ENCODE measurements at regions of chr17 and their contacts with region 1.

Region 1: DNA sequence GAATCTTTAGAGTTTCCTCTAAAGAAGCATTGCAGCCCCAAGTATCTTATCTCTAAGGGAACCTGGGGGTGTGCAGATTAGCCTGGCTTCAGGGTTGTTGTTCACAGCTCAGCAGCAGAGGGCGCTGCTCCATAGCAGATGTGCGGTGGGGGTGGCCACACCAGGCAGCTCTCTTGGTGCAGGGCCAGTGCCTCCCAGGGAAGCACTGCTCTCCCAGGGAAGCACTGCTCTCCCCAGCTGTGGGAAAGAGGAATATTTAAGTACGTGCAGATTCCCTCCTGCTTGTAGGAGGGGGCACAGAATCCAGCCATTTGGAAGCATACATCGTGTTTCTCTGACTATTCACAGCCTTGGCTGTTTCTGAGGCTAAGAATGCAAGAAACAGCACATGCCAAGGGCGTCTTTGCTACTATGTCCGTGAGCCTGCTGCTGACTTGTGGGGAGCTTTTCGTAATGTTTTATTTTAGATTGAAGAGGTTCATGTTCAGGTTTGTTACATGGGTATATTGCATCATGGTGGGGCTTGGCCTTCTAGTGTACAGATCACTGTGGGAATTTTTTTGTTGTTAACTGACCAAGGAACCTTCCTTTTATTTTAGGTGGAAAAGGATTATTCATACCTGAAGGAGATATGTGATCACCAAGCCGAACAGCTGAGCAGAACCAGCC is 217.8 kb downstream of the SPECC1 start:
- DNase-seq: peak; percentile 77
- H3K4me3 ChIP-seq: no peak overlapping the region
- H3K27ac ChIP-seq: no peak overlapping the region
- H3K4me1 ChIP-seq: no peaks in the 10 kb centered on the region
- H3K27me3 ChIP-seq: no peaks in the 10 kb centered on the region
- CTCF ChIP-seq: peak; percentile 79 to 84
- POLR2A ChIP-seq: no peak

Region 2: GRCh38 chr17:19992803-19993713 is 233.9 kb before region 1 on chr17:
- CTCF ChIA-PET with region 1: interaction called, 10 read pairs
- POLR2A ChIA-PET with region 1: no interaction called
- dilution Hi-C with region 1: no loop called
- intact Hi-C with region 1: loop called (anchors 5 kb)
- DNase-seq: peak; percentile 85
- H3K4me3 ChIP-seq: no peak overlapping the region
- H3K27ac ChIP-seq: no peak overlapping the region
- H3K4me1 ChIP-seq: no peaks in the 10 kb centered on the region
- H3K27me3 ChIP-seq: peaks cover 2 to 5% of the 10 kb centered on the region in 2 experiments
- CTCF ChIP-seq: peak; percentile 60 to 69
- POLR2A ChIP-seq: no peak

Region 3: GRCh38 chr17:20121359-20122253 is 105.3 kb before region 1 on chr17:
- CTCF ChIA-PET with region 1: interaction called, 31 read pairs
- POLR2A ChIA-PET with region 1: no interaction called
- dilution Hi-C with region 1: no loop called
- intact Hi-C with region 1: loop called (anchors 1 kb)
- DNase-seq: peak; percentile 52
- H3K4me3 ChIP-seq: no peak overlapping the region
- H3K27ac ChIP-seq: no peak overlapping the region
- H3K4me1 ChIP-seq: no peaks in the 10 kb centered on the region
- H3K27me3 ChIP-seq: no peaks in the 10 kb centered on the region
- CTCF ChIP-seq: peak; percentile 73 to 82
- POLR2A ChIP-seq: no peak

Region 4: DNA sequence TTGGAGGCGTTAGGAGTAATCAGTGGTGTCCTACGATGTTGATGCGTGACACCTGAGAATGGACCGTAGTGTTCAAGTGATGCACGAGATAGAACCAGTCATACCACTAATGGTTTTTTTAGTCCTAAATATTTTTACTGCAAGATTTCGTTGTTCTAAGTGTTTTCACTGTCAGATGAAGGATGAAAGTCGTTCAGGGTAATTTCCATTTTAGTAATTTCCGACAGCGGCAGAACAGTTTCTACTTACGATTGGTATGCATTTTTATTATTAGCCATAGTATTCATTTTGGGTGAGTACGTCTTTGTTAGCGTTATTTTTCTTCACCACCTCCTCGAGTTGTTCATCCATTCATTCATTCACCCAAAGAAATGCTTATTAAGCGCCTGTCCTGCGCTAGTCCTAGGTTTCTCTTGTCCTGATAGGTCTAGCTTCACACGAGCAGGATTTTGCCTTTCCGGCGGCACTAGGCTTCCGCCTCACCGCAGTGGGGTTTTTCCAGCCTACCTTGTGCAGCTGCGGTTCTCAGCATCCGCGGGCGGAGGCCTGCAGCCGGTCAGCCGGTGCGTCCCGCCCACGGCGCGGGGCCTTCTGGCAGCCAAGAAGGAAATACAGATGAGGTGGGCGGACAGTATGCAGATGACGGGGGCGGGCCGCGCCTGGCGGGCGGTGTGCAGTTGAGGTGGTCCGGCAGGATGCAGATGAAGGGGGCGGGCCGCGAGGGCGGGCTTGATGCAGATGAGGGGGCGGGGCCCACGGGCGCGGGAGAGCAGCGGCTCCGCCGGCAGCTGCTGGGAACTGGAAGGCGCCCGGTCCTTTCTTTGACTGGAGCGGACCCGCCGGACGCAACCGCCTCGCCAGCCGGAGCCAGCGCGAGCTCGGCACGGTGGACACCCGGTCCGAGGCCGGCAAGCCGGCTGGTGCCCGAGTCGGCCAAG is 71.4 kb before region 1 on chr17:
- CTCF ChIA-PET with region 1: interaction called, 3 read pairs
- POLR2A ChIA-PET with region 1: no interaction called
- dilution Hi-C with region 1: no loop called
- intact Hi-C with region 1: loop called (anchors 1 kb)
- DNase-seq: peak; percentile 96
- H3K4me3 ChIP-seq: peak overlapping the region; percentile 33 to 52 (median 49)
- H3K27ac ChIP-seq: no peak overlapping the region
- H3K4me1 ChIP-seq: peaks cover 7% of the 10 kb centered on the region
- H3K27me3 ChIP-seq: peaks cover 0 to 9% of the 10 kb centered on the region in 2 experiments
- CTCF ChIP-seq: no peak
- POLR2A ChIP-seq: no peak

Region 5: GRCh38 chr17:20206068-20206467 is 20.9 kb before region 1 on chr17:
- CTCF ChIA-PET with region 1: interaction called, 14 read pairs
- POLR2A ChIA-PET with region 1: no interaction called
- dilution Hi-C with region 1: no loop called
- intact Hi-C with region 1: no loop called
- DNase-seq: peak; percentile 37
- H3K4me3 ChIP-seq: no peak overlapping the region
- H3K27ac ChIP-seq: peak overlapping the region; percentile 34
- H3K4me1 ChIP-seq: peaks cover 17% of the 10 kb centered on the region
- H3K27me3 ChIP-seq: no peaks in the 10 kb centered on the region
- CTCF ChIP-seq: no peak
- POLR2A ChIP-seq: no peak

Region 6: DNA sequence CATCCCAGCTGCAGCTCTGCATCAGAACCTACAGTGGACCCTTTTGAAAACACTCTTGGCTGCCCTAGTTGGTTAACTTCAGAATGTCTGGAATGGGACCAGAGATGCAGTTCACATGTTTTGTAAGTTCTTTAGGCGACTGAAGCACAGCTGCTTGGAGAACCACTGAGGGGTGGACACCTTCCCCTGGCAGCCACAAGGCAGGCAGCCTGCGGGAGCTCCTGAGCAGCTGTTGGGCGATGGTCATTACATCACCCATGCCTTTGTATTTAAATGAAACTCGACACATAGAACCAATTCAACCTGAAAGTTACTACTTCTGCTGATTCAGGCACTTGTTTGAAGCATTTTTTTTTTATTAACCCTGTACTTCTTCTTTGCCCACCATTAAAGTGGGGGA is 88.9 kb after region 1 on chr17:
- CTCF ChIA-PET with region 1: interaction called, 45 read pairs
- POLR2A ChIA-PET with region 1: no interaction called
- dilution Hi-C with region 1: no loop called
- intact Hi-C with region 1: loop called (anchors 1 kb)
- DNase-seq: no peak
- H3K4me3 ChIP-seq: no peak overlapping the region
- H3K27ac ChIP-seq: no peak overlapping the region
- H3K4me1 ChIP-seq: no peaks in the 10 kb centered on the region
- H3K27me3 ChIP-seq: no peaks in the 10 kb centered on the region
- CTCF ChIP-seq: no peak
- POLR2A ChIP-seq: no peak

Region 7: DNA sequence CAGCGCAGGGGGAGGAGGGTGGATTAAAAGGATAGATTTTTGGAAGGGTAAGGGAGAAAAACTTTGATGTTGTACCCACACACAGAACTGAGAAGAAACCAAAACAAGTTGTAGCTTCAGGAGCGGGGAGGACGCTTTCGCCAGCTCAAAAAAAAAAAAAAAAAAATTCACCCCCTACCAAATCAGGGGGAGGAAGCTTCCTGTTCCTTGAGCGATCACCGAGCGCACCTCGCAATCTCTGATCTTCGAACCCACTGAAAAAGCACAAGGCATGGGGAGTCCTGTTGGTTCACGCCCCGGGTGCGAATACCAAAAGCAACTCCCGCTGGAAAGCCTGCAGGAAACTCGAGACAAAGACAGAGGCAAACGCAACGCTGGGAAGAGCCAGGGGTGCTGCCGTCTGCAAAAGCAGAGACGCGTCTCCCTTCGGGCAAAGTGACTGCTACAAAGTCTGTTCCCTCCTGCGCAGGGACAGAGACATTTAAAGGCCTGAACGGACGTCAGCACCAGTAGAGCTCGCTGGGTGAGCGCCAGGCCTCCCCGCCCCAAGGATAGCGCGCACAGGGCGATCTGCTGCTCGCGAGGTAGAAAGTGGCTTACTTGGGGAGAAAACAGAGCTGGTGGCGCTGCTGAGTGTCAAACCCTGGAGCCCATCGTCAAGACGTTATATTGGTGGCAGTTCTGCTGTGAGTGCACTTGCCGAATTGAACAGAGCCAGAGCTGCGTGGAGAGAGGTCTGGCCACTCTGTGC is 625.5 kb after region 1 on chr17:
- CTCF ChIA-PET with region 1: no interaction called
- POLR2A ChIA-PET with region 1: no interaction called
- dilution Hi-C with region 1: no loop called
- intact Hi-C with region 1: loop called (anchors 5 kb)
- DNase-seq: no peak
- H3K4me3 ChIP-seq: no peak overlapping the region
- H3K27ac ChIP-seq: no peak overlapping the region
- H3K4me1 ChIP-seq: no peaks in the 10 kb centered on the region
- H3K27me3 ChIP-seq: peaks cover 19 to 30% of the 10 kb centered on the region in 2 experiments
- CTCF ChIP-seq: no peak
- POLR2A ChIP-seq: no peak